ENCODE measurements at regions of chr1 and their contacts with region 1.

Region 1: GRCh38 chr1:66271216-66271903 is 262.6 kb upstream of the SGIP1 start:
- DNase-seq: peak; percentile 75
- H3K4me3 Mint-ChIP-seq: peak overlapping the region; percentile 38
- H3K27ac Mint-ChIP-seq: peak overlapping the region; percentile 72
- H3K4me1 Mint-ChIP-seq: peaks cover 38% of the 10 kb centered on the region
- H3K27me3 Mint-ChIP-seq: no peaks in the 10 kb centered on the region
- CTCF ChIP-seq: no peak

Region 2: DNA sequence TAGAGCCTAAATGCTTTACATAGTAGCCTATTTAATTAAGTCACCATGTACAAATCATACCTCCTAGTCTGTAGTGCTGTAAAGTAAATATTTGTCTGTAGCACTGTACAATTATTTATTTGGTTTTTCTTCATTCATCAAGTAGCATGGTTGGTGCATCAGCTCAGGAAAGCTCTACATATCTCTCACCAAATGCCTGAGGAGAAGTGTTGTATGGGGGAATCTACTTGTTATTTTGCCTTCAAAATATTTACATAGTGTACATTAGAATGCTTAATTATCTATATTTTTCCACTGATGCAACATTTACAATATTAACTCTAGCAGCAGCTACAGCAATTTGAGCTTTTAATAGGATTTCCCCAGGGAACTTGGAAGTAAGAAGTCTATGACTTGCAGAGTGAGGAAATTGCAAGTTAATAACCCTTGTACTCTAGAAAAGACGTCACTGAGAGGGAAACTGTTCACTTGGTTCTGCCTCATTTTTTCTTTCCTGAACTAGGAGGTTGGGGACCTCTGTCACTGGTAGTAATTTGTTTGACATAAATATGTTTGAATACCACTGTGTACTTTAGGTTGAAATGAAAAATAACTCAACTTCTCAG is 271.2 kb before region 1 on chr1:
- CTCF ChIA-PET with region 1: no interaction called
- intact Hi-C with region 1: no loop called
- DNase-seq: no peak
- H3K4me3 Mint-ChIP-seq: no peak overlapping the region
- H3K27ac Mint-ChIP-seq: no peak overlapping the region
- H3K4me1 Mint-ChIP-seq: peaks cover 7% of the 10 kb centered on the region
- H3K27me3 Mint-ChIP-seq: no peaks in the 10 kb centered on the region
- CTCF ChIP-seq: no peak

Region 3: DNA sequence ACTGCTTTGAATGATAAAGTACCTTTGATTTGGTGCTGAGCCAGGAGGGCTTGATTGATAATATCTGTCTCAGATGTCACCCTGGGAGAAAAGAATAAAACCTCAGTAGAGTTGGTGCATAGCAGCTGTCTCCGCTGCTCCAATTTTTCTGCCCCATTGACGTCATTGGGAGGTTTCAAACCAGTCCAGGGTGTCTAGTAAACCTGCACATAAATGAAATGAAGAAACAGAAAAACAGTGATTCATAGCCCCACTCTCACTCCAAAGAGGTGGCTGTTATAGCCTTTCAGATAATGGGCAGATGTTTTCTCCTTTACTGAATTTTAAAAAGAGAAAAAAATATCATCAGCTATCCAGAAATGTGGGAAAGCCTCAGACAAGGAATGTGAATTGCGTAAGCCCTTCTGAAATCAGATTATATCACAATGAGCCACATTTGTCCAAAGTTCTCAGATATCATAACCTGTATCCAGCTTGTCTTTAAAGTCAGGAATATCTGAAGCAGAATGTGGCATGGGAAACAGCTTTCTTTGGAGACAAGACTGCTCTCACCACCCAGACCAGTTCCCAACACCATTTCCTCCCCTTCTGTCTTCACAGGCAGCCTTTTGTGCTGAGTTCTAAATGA is 88.7 kb before region 1 on chr1:
- CTCF ChIA-PET with region 1: no interaction called
- intact Hi-C with region 1: no loop called
- DNase-seq: no peak
- H3K4me3 Mint-ChIP-seq: no peak overlapping the region
- H3K27ac Mint-ChIP-seq: no peak overlapping the region
- H3K4me1 Mint-ChIP-seq: peaks cover under 1% of the 10 kb centered on the region
- H3K27me3 Mint-ChIP-seq: no peaks in the 10 kb centered on the region
- CTCF ChIP-seq: no peak

Region 4: DNA sequence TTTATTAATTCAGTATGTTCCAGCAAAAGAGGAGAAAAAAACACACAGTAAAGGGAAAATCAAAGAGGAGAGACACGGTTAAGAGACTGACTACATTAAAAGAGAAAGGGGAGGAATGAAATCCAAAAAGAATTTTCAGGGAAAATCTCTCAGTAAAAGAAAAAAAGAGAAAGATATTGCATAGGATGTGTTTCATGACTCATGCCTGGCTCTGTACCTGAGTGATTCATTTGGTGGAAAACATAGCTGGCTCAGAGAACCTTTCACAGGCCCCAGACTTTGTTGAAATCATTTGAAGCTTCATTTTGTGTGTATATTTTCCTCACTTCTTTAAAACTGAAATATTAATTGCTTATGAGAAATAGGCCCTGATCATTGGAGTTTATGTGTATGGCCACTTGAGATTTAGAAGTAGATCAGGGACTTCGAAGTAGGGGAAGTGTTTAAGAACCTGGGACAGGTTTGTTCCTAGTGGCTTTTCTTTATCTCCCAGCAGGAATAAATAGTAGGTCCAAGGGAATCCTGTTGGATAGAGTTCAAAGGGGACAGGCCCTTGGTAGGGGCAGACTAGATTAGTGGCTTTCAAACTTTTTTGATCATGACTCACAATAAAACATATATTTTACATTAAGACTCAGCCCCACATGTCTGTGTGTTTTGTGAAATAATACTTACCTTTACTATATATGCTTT is 23.5 kb after region 1 on chr1:
- CTCF ChIA-PET with region 1: no interaction called
- intact Hi-C with region 1: no loop called
- DNase-seq: peak; percentile 19
- H3K4me3 Mint-ChIP-seq: no peak overlapping the region
- H3K27ac Mint-ChIP-seq: peak overlapping the region; percentile 97
- H3K4me1 Mint-ChIP-seq: peaks cover 40% of the 10 kb centered on the region
- H3K27me3 Mint-ChIP-seq: no peaks in the 10 kb centered on the region
- CTCF ChIP-seq: no peak

Region 5: GRCh38 chr1:66351913-66352312 is 80.6 kb after region 1 on chr1:
- CTCF ChIA-PET with region 1: no interaction called
- intact Hi-C with region 1: no loop called
- DNase-seq: no peak
- H3K4me3 Mint-ChIP-seq: no peak overlapping the region
- H3K27ac Mint-ChIP-seq: no peak overlapping the region
- H3K4me1 Mint-ChIP-seq: no peaks in the 10 kb centered on the region
- H3K27me3 Mint-ChIP-seq: no peaks in the 10 kb centered on the region
- CTCF ChIP-seq: no peak

Region 6: GRCh38 chr1:66436378-66437145 is 165.2 kb after region 1 on chr1:
- CTCF ChIA-PET with region 1: interaction called, 3 read pairs
- intact Hi-C with region 1: loop called (anchors 1 kb)
- DNase-seq: peak; percentile 48
- H3K4me3 Mint-ChIP-seq: no peak overlapping the region
- H3K27ac Mint-ChIP-seq: peak overlapping the region; percentile 24
- H3K4me1 Mint-ChIP-seq: peaks cover 37% of the 10 kb centered on the region
- H3K27me3 Mint-ChIP-seq: no peaks in the 10 kb centered on the region
- CTCF ChIP-seq: peak; percentile 30